ENCODE measurements at regions of chr5 and their contacts with region 1.

Region 1: GRCh38 chr5:14644623-14645237 is 19.8 kb upstream of the OTULIN start:
- DNase-seq: no peak
- H3K4me3 Mint-ChIP-seq: no peak overlapping the region
- H3K27ac Mint-ChIP-seq: no peak overlapping the region
- H3K4me1 Mint-ChIP-seq: no peaks in the 10 kb centered on the region
- H3K27me3 Mint-ChIP-seq: peaks cover 54% of the 10 kb centered on the region
- CTCF ChIP-seq: no peak

Region 2: GRCh38 chr5:13976867-13977830 is 667.6 kb before region 1 on chr5:
- CTCF ChIA-PET with region 1: interaction called, 18 read pairs
- POLR2A ChIA-PET with region 1: interaction called, 3 read pairs
- intact Hi-C with region 1: loop called (anchors 1 kb)
- DNase-seq: peak; percentile 64
- H3K4me3 Mint-ChIP-seq: no peak overlapping the region
- H3K27ac Mint-ChIP-seq: no peak overlapping the region
- H3K4me1 Mint-ChIP-seq: no peaks in the 10 kb centered on the region
- H3K27me3 Mint-ChIP-seq: peaks cover 8% of the 10 kb centered on the region
- CTCF ChIP-seq: peak; percentile 44

Region 3: GRCh38 chr5:14383923-14384322 is 260.8 kb before region 1 on chr5:
- CTCF ChIA-PET with region 1: interaction called, 11 read pairs
- POLR2A ChIA-PET with region 1: no interaction called
- intact Hi-C with region 1: no loop called
- DNase-seq: no peak
- H3K4me3 Mint-ChIP-seq: no peak overlapping the region
- H3K27ac Mint-ChIP-seq: peak overlapping the region; percentile 23
- H3K4me1 Mint-ChIP-seq: no peaks in the 10 kb centered on the region
- H3K27me3 Mint-ChIP-seq: no peaks in the 10 kb centered on the region
- CTCF ChIP-seq: no peak

Region 4: GRCh38 chr5:14399054-14399692 is 245.6 kb before region 1 on chr5:
- CTCF ChIA-PET with region 1: interaction called, 114 read pairs
- POLR2A ChIA-PET with region 1: interaction called, 3 read pairs
- intact Hi-C with region 1: loop called (anchors 1 kb)
- DNase-seq: peak; percentile 64
- H3K4me3 Mint-ChIP-seq: no peak overlapping the region
- H3K27ac Mint-ChIP-seq: no peak overlapping the region
- H3K4me1 Mint-ChIP-seq: no peaks in the 10 kb centered on the region
- H3K27me3 Mint-ChIP-seq: no peaks in the 10 kb centered on the region
- CTCF ChIP-seq: peak; percentile 57

Region 5: GRCh38 chr5:14428302-14429081 is 216.2 kb before region 1 on chr5:
- CTCF ChIA-PET with region 1: interaction called, 11 read pairs
- POLR2A ChIA-PET with region 1: no interaction called
- intact Hi-C with region 1: no loop called
- DNase-seq: no peak
- H3K4me3 Mint-ChIP-seq: no peak overlapping the region
- H3K27ac Mint-ChIP-seq: no peak overlapping the region
- H3K4me1 Mint-ChIP-seq: no peaks in the 10 kb centered on the region
- H3K27me3 Mint-ChIP-seq: no peaks in the 10 kb centered on the region
- CTCF ChIP-seq: no peak

Region 6: GRCh38 chr5:14630671-14631070 is 14.1 kb before region 1 on chr5:
- CTCF ChIA-PET with region 1: interaction called, 24 read pairs
- POLR2A ChIA-PET with region 1: interaction called, 4 read pairs
- intact Hi-C with region 1: no loop called
- DNase-seq: no peak
- H3K4me3 Mint-ChIP-seq: no peak overlapping the region
- H3K27ac Mint-ChIP-seq: no peak overlapping the region
- H3K4me1 Mint-ChIP-seq: no peaks in the 10 kb centered on the region
- H3K27me3 Mint-ChIP-seq: peaks cover 25% of the 10 kb centered on the region
- CTCF ChIP-seq: no peak

Region 7: DNA sequence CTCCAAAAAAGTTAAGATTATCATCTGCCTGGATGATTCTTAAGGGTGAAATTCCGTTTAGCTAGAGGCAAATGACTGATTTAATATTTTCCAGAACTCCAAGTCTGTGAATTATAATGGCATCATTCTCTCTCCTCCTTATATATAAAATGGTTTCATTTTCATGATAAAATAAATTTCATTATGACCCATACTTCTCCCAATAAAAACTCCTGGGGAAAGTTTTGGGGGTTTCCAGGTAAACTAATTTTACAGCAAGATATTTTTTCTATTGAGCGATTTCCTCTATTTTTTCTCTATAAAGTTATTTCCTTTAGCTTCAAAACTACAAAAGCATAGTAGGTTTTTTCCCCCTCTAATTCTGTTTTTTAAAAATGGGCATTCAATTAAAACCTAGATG is 12.2 kb after region 1 on chr5:
- CTCF ChIA-PET with region 1: interaction called, 21 read pairs
- POLR2A ChIA-PET with region 1: interaction called, 6 read pairs
- intact Hi-C with region 1: no loop called
- DNase-seq: no peak
- H3K4me3 Mint-ChIP-seq: no peak overlapping the region
- H3K27ac Mint-ChIP-seq: no peak overlapping the region
- H3K4me1 Mint-ChIP-seq: peaks cover 19% of the 10 kb centered on the region
- H3K27me3 Mint-ChIP-seq: no peaks in the 10 kb centered on the region
- CTCF ChIP-seq: no peak